Endothelial cell of umbilical vein (primary cell): ENCODE measurements at regions of chr6 and their contacts with region 1.

Region 1: GRCh38 chr6:22263748-22264147 is 33.1 kb downstream of the PRL start:
- DNase-seq: no peak
- H3K4me3 ChIP-seq: no peak overlapping the region
- H3K27ac ChIP-seq: no peak overlapping the region
- H3K4me1 ChIP-seq: no peaks in the 10 kb centered on the region
- H3K27me3 ChIP-seq: no peaks in the 10 kb centered on the region
- CTCF ChIP-seq: no peak
- POLR2A ChIP-seq: no peak

Region 2: GRCh38 chr6:22306741-22307466 is 43.2 kb after region 1 on chr6:
- CTCF ChIA-PET with region 1: no interaction called
- POLR2A ChIA-PET with region 1: no interaction called
- dilution Hi-C with region 1: no loop called
- intact Hi-C with region 1: no loop called
- DNase-seq: no peak
- H3K4me3 ChIP-seq: no peak overlapping the region
- H3K27ac ChIP-seq: no peak overlapping the region
- H3K4me1 ChIP-seq: no peaks in the 10 kb centered on the region
- H3K27me3 ChIP-seq: no peaks in the 10 kb centered on the region
- CTCF ChIP-seq: no peak
- POLR2A ChIP-seq: no peak

Region 3: GRCh38 chr6:22699151-22699550 is 435.4 kb after region 1 on chr6:
- CTCF ChIA-PET with region 1: no interaction called
- POLR2A ChIA-PET with region 1: no interaction called
- dilution Hi-C with region 1: no loop called
- intact Hi-C with region 1: loop called (anchors 10 kb)
- DNase-seq: peak; percentile 82
- H3K4me3 ChIP-seq: no peak overlapping the region
- H3K27ac ChIP-seq: no peak overlapping the region
- H3K4me1 ChIP-seq: peaks cover 4% of the 10 kb centered on the region
- H3K27me3 ChIP-seq: no peaks in the 10 kb centered on the region
- CTCF ChIP-seq: no peak
- POLR2A ChIP-seq: no peak

Region 4: GRCh38 chr6:23173234-23173633 is 909.5 kb after region 1 on chr6:
- CTCF ChIA-PET with region 1: no interaction called
- POLR2A ChIA-PET with region 1: no interaction called
- dilution Hi-C with region 1: no loop called
- intact Hi-C with region 1: no loop called
- DNase-seq: no peak
- H3K4me3 ChIP-seq: no peak overlapping the region
- H3K27ac ChIP-seq: no peak overlapping the region
- H3K4me1 ChIP-seq: no peaks in the 10 kb centered on the region
- H3K27me3 ChIP-seq: no peaks in the 10 kb centered on the region
- CTCF ChIP-seq: no peak
- POLR2A ChIP-seq: no peak